Endothelial cell of umbilical vein (primary cell): ENCODE measurements at regions of chr3 and their contacts with region 1.

Region 1: GRCh38 chr3:161274719-161275298 is 53.7 kb downstream of the NMD3 start:
- DNase-seq: peak; percentile 77
- H3K4me3 ChIP-seq: no peak overlapping the region
- H3K27ac ChIP-seq: no peak overlapping the region
- H3K4me1 ChIP-seq: no peaks in the 10 kb centered on the region
- H3K27me3 ChIP-seq: no peaks in the 10 kb centered on the region
- CTCF ChIP-seq: peak; percentile 54 to 64
- POLR2A ChIP-seq: no peak

Region 2: DNA sequence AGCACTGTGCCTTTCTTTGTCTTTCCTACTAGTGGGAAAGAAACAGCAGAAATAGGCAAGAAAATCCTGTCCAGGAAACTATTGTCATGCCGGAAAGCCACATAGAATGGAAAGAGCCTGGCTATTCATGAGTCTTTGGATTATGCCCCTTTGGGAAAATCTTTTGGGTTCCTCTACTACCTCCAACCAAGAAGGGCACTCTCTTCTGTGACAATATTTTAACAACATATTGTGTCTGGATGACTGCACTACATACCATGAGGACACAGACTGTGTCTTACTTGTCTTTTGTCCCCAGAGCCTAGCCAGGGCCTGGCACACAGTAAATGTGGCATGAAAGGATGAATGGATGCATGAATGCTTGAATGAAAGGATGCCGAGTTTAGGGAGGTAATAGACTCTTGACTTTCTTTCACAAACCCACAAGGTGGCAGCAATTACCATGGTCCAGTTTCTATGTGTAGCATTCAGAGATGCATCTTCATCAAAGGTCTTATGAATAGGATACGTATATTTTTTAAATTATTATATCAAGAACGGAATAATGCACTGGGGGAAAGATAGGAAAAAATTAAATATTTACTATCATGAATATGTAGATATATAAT is 567.5 kb before region 1 on chr3:
- CTCF ChIA-PET with region 1: interaction called, 9 read pairs
- POLR2A ChIA-PET with region 1: no interaction called
- dilution Hi-C with region 1: no loop called
- intact Hi-C with region 1: loop called (anchors 1 kb)
- DNase-seq: peak; percentile 43
- H3K4me3 ChIP-seq: no peak overlapping the region
- H3K27ac ChIP-seq: no peak overlapping the region
- H3K4me1 ChIP-seq: no peaks in the 10 kb centered on the region
- H3K27me3 ChIP-seq: peaks cover 2 to 7% of the 10 kb centered on the region in 2 experiments
- CTCF ChIP-seq: peak; percentile 14 to 36
- POLR2A ChIP-seq: no peak

Region 3: GRCh38 chr3:160921020-160921635 is 353.7 kb before region 1 on chr3:
- CTCF ChIA-PET with region 1: interaction called, 48 read pairs
- POLR2A ChIA-PET with region 1: no interaction called
- dilution Hi-C with region 1: no loop called
- intact Hi-C with region 1: loop called (anchors 1 kb)
- DNase-seq: peak; percentile 55
- H3K4me3 ChIP-seq: no peak overlapping the region
- H3K27ac ChIP-seq: no peak overlapping the region
- H3K4me1 ChIP-seq: no peaks in the 10 kb centered on the region
- H3K27me3 ChIP-seq: no peaks in the 10 kb centered on the region
- CTCF ChIP-seq: peak; percentile 75 to 77
- POLR2A ChIP-seq: no peak

Region 4: GRCh38 chr3:161096771-161097355 is 177.9 kb before region 1 on chr3:
- CTCF ChIA-PET with region 1: interaction called, 6 read pairs
- POLR2A ChIA-PET with region 1: no interaction called
- dilution Hi-C with region 1: no loop called
- intact Hi-C with region 1: loop called (anchors 1 kb)
- DNase-seq: peak; percentile 21
- H3K4me3 ChIP-seq: no peak overlapping the region
- H3K27ac ChIP-seq: no peak overlapping the region
- H3K4me1 ChIP-seq: no peaks in the 10 kb centered on the region
- H3K27me3 ChIP-seq: no peaks in the 10 kb centered on the region
- CTCF ChIP-seq: peak; percentile 9 to 24
- POLR2A ChIP-seq: no peak

Region 5: DNA sequence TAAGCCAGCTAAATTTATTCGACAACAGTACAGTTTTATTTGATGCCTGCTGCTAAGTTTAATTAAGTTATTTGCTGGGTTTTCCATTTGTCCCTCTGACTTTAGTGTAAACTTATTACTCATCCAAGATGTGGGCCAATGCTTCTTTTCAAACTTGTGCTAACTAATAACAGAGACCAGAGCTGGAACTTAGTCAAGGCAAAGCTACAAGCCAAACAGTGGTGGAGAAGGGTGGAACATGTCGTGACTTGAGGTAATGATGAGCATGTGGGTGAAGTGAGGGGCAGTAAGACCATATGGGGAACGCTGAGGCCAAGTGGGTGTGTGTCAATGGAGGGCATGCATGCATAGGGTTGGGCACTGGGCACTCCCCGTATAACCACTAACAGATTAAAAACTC is 10.2 kb after region 1 on chr3:
- CTCF ChIA-PET with region 1: interaction called, 23 read pairs
- POLR2A ChIA-PET with region 1: no interaction called
- dilution Hi-C with region 1: no loop called
- intact Hi-C with region 1: no loop called
- DNase-seq: no peak
- H3K4me3 ChIP-seq: no peak overlapping the region
- H3K27ac ChIP-seq: no peak overlapping the region
- H3K4me1 ChIP-seq: no peaks in the 10 kb centered on the region
- H3K27me3 ChIP-seq: no peaks in the 10 kb centered on the region
- CTCF ChIP-seq: no peak
- POLR2A ChIP-seq: no peak

Region 6: DNA sequence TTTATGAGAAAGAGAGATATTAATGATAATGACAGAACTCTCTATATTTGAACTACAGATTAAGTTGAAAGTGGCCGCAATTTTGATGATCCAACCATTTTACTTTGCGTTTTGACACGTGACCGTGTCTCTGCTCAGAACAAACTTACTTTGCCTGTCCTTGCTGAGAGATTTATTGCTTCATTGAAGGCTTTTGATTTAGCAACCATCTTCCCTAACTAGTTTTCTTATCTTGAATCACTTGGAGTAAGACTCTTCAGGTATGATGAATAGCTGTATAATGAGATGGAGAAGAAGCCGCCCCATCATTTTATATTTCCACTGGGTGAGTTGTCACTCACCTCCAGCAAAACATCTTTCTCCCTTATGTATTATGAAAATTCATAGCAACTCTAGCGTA is 104.6 kb after region 1 on chr3:
- CTCF ChIA-PET with region 1: no interaction called
- POLR2A ChIA-PET with region 1: no interaction called
- dilution Hi-C with region 1: no loop called
- intact Hi-C with region 1: no loop called
- DNase-seq: no peak
- H3K4me3 ChIP-seq: no peak overlapping the region
- H3K27ac ChIP-seq: no peak overlapping the region
- H3K4me1 ChIP-seq: no peaks in the 10 kb centered on the region
- H3K27me3 ChIP-seq: peaks cover 0 to 9% of the 10 kb centered on the region in 2 experiments
- CTCF ChIP-seq: no peak
- POLR2A ChIP-seq: no peak

Region 7: DNA sequence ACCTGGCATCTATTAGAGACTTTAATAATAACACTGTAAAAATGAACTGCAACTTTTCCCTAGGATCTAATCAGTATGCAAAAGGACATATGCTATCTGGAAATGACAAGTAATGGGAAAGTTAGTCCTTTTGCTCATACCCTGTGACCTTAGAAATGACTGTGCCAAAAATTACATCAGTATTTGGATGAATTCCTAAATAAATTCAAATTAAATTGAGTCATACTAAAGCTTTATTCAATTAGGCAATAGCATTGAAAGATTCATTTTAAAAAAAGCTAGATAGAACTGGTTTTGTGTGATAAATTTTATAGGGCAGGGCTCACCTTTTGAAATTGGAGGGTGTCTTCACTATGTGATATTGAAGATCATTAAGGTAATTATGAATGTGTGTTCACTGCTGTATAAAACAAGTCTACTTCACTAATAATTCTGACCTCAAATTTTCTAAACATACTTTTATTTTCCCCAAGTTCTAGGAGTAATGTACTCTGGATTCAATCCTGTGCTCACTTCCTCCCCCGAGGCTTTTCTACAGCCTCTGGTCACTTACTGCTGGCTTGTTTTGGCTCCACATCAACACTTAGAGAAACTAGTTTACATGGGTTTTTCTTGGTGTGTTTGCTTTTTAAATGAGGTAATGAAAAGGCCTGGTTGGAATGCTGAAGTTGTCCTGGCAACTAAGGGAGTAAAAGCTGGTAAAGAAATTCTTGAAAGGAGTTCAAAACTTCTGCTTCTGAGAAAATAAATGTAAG is 140.9 kb after region 1 on chr3:
- CTCF ChIA-PET with region 1: interaction called, 61 read pairs
- POLR2A ChIA-PET with region 1: no interaction called
- dilution Hi-C with region 1: no loop called
- intact Hi-C with region 1: no loop called
- DNase-seq: peak; percentile 93
- H3K4me3 ChIP-seq: peak overlapping the region in 1 of 3 experiments; percentile 10
- H3K27ac ChIP-seq: peak overlapping the region; percentile 97
- H3K4me1 ChIP-seq: peaks cover 19% of the 10 kb centered on the region
- H3K27me3 ChIP-seq: no peaks in the 10 kb centered on the region
- CTCF ChIP-seq: no peak
- POLR2A ChIP-seq: no peak